CD8-positive, alpha-beta T cell (primary cell): ENCODE measurements at regions of chr6 and their contacts with region 1.

Region 1: DNA sequence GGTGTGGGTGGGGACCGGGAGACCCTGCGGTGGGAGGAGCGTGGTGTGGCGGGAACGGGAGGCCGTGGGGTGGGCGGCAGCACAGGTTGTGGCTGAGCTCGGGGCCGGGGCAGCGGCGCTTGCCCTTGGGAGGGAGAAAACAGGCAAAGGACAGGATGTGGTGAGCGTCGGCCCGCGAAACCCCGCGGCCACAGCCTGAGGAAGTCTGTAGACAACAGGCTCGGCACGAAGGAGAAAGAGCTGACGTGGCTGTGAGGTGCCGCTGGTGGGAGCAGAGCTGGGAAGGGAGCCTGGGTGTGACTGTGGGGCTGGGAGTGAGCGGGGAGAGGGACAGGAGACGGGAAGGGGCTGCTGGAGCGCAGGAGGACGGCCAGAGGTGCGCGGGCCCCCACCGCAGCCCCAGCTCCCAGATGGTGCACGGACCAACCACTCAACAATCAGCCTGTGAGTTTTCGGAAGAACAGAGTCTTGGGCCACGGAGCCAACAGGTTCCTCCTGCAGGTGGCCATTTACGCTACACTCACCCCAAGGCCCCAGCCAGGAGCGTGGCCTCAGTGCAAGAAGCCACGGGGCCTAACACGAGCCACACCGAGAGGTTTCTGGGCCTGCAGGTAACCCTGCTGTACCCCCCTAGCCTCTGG is 202.8 kb downstream of the DLL1 start:
- DNase-seq: peak; percentile 22 to 87 (median 66)
- ATAC-seq: peak; percentile 62
- H3K4me3 ChIP-seq: peak overlapping the region; percentile 48 to 73
- H3K4me3 Mint-ChIP-seq: peak overlapping the region; percentile 91
- H3K27ac ChIP-seq: peak overlapping the region; percentile 63 to 73
- H3K27ac Mint-ChIP-seq: peak overlapping the region; percentile 95
- H3K4me1 ChIP-seq: peaks cover 27% of the 10 kb centered on the region
- H3K4me1 Mint-ChIP-seq: peaks cover 33% of the 10 kb centered on the region
- H3K27me3 ChIP-seq: peaks cover 0 to 4% of the 10 kb centered on the region in 2 experiments
- H3K27me3 Mint-ChIP-seq: no peaks in the 10 kb centered on the region
- CTCF ChIP-seq: no peak

Region 2: DNA sequence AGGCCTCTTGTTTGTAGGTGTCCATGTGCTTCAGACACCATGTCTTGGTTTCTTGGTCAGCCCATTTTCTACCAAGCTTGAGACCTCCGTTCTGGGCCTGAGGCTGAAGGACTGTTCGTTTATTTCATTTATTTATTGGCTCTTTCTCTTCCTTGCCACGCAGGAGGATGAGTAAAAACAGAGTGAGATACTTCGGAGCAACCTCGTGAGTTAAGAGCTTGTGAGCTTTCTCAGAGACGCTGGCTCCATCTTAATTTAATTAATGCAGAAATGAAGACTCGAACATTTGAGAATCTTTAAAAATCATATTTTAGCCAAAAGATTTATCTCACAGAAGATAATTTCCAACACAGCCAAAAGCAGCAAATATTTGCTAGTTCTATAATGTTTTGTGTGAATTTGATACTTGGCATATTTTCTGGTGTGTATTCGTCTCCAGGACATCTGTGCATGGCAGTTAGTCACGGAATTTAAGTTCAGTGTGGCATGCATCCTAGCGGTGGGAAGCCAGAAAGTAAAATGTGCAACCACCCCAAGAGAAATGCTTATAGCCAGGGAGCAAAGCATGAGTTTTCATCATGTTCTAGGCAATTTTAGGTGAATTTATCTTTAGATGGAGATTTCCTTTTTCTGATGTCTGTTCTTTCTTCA is 910.4 kb before region 1 on chr6:
- CTCF ChIA-PET with region 1: no interaction called
- POLR2A ChIA-PET with region 1: no interaction called
- intact Hi-C with region 1: no loop called
- DNase-seq: no peak
- ATAC-seq: no peak
- H3K4me3 ChIP-seq: no peak overlapping the region
- H3K4me3 Mint-ChIP-seq: no peak overlapping the region
- H3K27ac ChIP-seq: no peak overlapping the region
- H3K27ac Mint-ChIP-seq: no peak overlapping the region
- H3K4me1 ChIP-seq: no peaks in the 10 kb centered on the region
- H3K4me1 Mint-ChIP-seq: no peaks in the 10 kb centered on the region
- H3K27me3 ChIP-seq: no peaks in the 10 kb centered on the region
- H3K27me3 Mint-ChIP-seq: peaks cover 12% of the 10 kb centered on the region
- CTCF ChIP-seq: no peak

Region 3: GRCh38 chr6:169851641-169852503 is 236.2 kb before region 1 on chr6:
- CTCF ChIA-PET with region 1: no interaction called
- POLR2A ChIA-PET with region 1: no interaction called
- intact Hi-C with region 1: no loop called
- DNase-seq: peak in 3 of 9 experiments; percentile 0 to 34 (median 8)
- ATAC-seq: no peak
- H3K4me3 ChIP-seq: no peak overlapping the region
- H3K4me3 Mint-ChIP-seq: no peak overlapping the region
- H3K27ac ChIP-seq: no peak overlapping the region
- H3K27ac Mint-ChIP-seq: no peak overlapping the region
- H3K4me1 ChIP-seq: no peaks in the 10 kb centered on the region
- H3K4me1 Mint-ChIP-seq: no peaks in the 10 kb centered on the region
- H3K27me3 ChIP-seq: no peaks in the 10 kb centered on the region
- H3K27me3 Mint-ChIP-seq: peaks cover 2% of the 10 kb centered on the region
- CTCF ChIP-seq: no peak

Region 4: GRCh38 chr6:169959136-169960002 is 128.7 kb before region 1 on chr6:
- CTCF ChIA-PET with region 1: no interaction called
- POLR2A ChIA-PET with region 1: interaction called, 3 read pairs
- intact Hi-C with region 1: loop called (anchors 2 to 5 kb)
- DNase-seq: peak; percentile 42 to 90 (median 61)
- ATAC-seq: peak; percentile 93
- H3K4me3 ChIP-seq: peak overlapping the region; percentile 0 to 3
- H3K4me3 Mint-ChIP-seq: peak overlapping the region; percentile 65
- H3K27ac ChIP-seq: peak overlapping the region; percentile 50 to 53
- H3K27ac Mint-ChIP-seq: peak overlapping the region; percentile 94
- H3K4me1 ChIP-seq: peaks cover 15% of the 10 kb centered on the region
- H3K4me1 Mint-ChIP-seq: peaks cover 26% of the 10 kb centered on the region
- H3K27me3 ChIP-seq: peaks cover 0 to 7% of the 10 kb centered on the region in 2 experiments
- H3K27me3 Mint-ChIP-seq: peaks cover 3% of the 10 kb centered on the region
- CTCF ChIP-seq: peak; percentile 33

Region 5: GRCh38 chr6:170024952-170025911 is 62.8 kb before region 1 on chr6:
- CTCF ChIA-PET with region 1: no interaction called
- POLR2A ChIA-PET with region 1: no interaction called
- intact Hi-C with region 1: no loop called
- DNase-seq: no peak
- ATAC-seq: no peak
- H3K4me3 ChIP-seq: no peak overlapping the region
- H3K4me3 Mint-ChIP-seq: no peak overlapping the region
- H3K27ac ChIP-seq: no peak overlapping the region
- H3K27ac Mint-ChIP-seq: no peak overlapping the region
- H3K4me1 ChIP-seq: no peaks in the 10 kb centered on the region
- H3K4me1 Mint-ChIP-seq: no peaks in the 10 kb centered on the region
- H3K27me3 ChIP-seq: peaks cover 0 to 4% of the 10 kb centered on the region in 2 experiments
- H3K27me3 Mint-ChIP-seq: peaks cover 18% of the 10 kb centered on the region
- CTCF ChIP-seq: no peak

Region 6: GRCh38 chr6:170052991-170053821 is 34.9 kb before region 1 on chr6:
- CTCF ChIA-PET with region 1: no interaction called
- POLR2A ChIA-PET with region 1: no interaction called
- intact Hi-C with region 1: no loop called
- DNase-seq: no peak
- ATAC-seq: no peak
- H3K4me3 ChIP-seq: no peak overlapping the region
- H3K4me3 Mint-ChIP-seq: no peak overlapping the region
- H3K27ac ChIP-seq: no peak overlapping the region
- H3K27ac Mint-ChIP-seq: no peak overlapping the region
- H3K4me1 ChIP-seq: no peaks in the 10 kb centered on the region
- H3K4me1 Mint-ChIP-seq: no peaks in the 10 kb centered on the region
- H3K27me3 ChIP-seq: peaks cover 0 to 2% of the 10 kb centered on the region in 2 experiments
- H3K27me3 Mint-ChIP-seq: peaks cover 3% of the 10 kb centered on the region
- CTCF ChIP-seq: no peak

Region 7: GRCh38 chr6:170147832-170148708 is 60.0 kb after region 1 on chr6:
- CTCF ChIA-PET with region 1: interaction called, 5 read pairs
- POLR2A ChIA-PET with region 1: interaction called, 29 read pairs
- intact Hi-C with region 1: loop called (anchors 2 kb)
- DNase-seq: peak; percentile 27 to 86 (median 69)
- ATAC-seq: peak; percentile 81
- H3K4me3 ChIP-seq: peak overlapping the region; percentile 35 to 46
- H3K4me3 Mint-ChIP-seq: peak overlapping the region; percentile 80
- H3K27ac ChIP-seq: peak overlapping the region; percentile 54 to 76
- H3K27ac Mint-ChIP-seq: peak overlapping the region; percentile 93
- H3K4me1 ChIP-seq: peaks cover 85% of the 10 kb centered on the region
- H3K4me1 Mint-ChIP-seq: peaks cover 70% of the 10 kb centered on the region
- H3K27me3 ChIP-seq: peaks cover 0 to 4% of the 10 kb centered on the region in 2 experiments
- H3K27me3 Mint-ChIP-seq: peaks cover 4% of the 10 kb centered on the region
- CTCF ChIP-seq: no peak